ENCODE measurements at regions of chr22 and their contacts with region 1.

Region 1: GRCh38 chr22:17785185-17786184 is 11.2 kb upstream of the BID start:
- DNase-seq: peak; percentile 91
- H3K4me3 Mint-ChIP-seq: no peak overlapping the region
- H3K27ac Mint-ChIP-seq: no peak overlapping the region
- H3K4me1 Mint-ChIP-seq: peaks cover 12% of the 10 kb centered on the region
- H3K27me3 Mint-ChIP-seq: peaks cover 6% of the 10 kb centered on the region

Region 2: DNA sequence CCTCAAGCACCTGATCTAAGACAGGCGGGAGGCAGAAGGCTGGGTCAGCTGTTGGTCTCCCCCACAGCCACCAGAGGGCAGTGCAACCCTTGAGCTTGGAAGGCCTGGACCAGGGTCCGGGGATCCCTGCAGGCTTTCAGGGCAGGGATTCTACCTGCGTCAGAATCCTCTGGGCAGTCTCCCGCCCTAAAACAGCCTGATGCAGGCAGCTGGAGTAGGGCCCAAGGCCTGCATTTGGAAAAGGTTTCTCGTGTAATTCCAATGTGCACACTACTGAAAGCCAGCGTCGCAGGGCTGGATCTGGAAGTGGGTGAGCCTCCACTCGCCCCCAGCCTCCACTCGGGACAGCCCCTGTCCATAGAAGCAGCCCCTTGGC is 43.0 kb before region 1 on chr22:
- intact Hi-C with region 1: loop called (anchors 1 kb)
- DNase-seq: peak; percentile 89
- H3K4me3 Mint-ChIP-seq: no peak overlapping the region
- H3K27ac Mint-ChIP-seq: no peak overlapping the region
- H3K4me1 Mint-ChIP-seq: no peaks in the 10 kb centered on the region
- H3K27me3 Mint-ChIP-seq: no peaks in the 10 kb centered on the region

Region 3: DNA sequence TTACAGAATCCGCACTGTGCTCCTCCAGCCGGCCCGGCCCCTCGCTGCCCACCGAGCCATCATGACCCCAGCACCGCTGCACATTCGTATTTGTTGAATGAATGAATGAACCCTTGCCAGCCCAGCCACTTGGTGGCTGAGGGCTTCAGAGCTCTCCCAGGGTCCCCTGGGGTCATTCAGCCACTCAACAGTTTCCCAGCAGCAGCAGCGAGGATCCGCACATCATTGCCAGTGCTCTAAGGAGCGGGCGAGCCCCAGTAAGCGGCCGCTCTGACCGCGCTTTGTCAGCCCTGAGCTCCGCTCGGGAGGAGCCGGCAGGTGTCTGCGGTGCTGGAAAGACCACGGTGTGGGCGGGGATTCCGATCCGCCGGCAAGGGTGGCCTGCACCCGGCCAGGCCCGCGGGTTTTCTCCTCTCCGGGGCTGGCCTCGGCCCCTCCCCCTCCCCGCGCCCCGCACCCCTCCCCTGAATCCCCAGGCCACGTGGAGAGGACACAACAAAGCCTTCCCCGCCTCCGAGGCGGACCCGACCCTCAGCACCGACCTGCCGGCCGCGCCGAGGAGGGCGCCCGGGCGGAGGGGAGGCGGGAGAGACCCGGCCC is 11.8 kb before region 1 on chr22:
- intact Hi-C with region 1: loop called (anchors 1 kb)
- DNase-seq: peak; percentile 90
- H3K4me3 Mint-ChIP-seq: peak overlapping the region; percentile 86
- H3K27ac Mint-ChIP-seq: peak overlapping the region; percentile 77
- H3K4me1 Mint-ChIP-seq: peaks cover 50% of the 10 kb centered on the region
- H3K27me3 Mint-ChIP-seq: peaks cover 14% of the 10 kb centered on the region